PC-3 (cell line): ENCODE measurements at regions of chr5 and their contacts with region 1.

Region 1: DNA sequence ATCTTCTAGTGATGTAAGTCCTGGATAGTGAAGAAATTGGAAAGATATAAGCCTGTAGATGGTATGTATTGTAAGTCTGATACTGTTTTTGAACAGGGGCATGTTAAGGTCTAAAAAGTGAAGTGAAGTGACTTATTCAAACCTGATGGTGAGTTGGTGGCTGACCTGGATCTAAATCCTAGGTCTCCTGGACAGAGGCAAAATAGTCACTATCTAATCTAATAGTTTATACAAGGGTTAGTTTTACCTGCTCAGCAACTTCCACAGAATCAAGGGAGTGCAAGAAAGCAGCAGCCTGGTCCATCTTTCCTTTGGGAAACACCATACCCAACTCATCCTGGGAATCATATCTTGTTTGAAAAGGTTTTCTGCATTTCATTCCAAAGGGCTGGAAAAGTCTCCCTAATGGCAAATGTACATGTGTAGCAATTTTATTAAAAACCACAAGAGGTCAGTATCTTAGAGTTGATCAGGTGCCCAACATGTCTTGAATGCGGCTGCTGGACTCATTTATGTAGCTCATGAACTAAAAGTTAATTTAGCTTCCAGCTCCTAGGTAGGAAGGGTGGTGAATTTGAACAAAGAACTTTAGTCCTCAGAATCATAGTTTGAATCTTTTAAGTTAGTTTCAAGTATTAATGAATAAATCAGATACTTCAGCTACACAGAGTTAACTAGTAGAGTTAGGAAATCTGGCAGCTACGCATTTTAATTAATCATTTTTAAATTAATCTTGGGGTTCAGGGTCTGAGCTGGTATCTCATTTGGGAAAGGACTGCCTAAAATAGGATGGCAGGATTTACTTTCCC is 26.0 kb downstream of the SKP2 start:
- DNase-seq: peak; percentile 58
- ATAC-seq: peak; percentile 89
- H3K4me3 ChIP-seq: no peak overlapping the region
- H3K27ac ChIP-seq: no peak overlapping the region
- H3K4me1 ChIP-seq: no peaks in the 10 kb centered on the region
- H3K27me3 ChIP-seq: no peaks in the 10 kb centered on the region
- CTCF ChIP-seq: peak; percentile 80

Region 2: DNA sequence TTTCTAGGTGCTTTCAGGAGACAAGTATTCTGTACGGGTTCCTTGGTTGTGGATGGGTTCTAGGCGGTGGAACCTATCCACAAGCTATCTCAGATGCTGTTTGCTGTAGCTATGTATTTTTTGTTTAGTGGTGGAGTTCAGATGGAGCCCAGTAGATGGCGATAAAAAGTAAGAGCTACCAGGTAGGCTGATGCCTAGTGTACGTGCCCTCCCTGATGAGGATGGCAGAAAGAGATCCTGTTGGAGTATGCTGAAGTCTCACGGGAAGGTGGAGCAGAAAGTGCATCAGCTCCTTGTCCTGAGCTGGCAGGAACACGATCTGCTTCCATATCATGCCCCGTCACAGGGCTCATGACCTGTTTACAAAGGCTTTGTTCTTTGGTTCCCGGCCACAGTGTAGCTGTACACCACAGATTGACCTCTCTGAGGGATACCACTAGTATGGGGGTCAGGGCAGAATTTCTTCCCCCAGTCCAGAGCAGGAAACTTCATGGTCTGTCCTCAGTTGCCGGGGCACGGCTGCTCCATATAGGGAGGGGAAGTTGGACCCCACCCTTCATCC is 98.6 kb before region 1 on chr5:
- CTCF ChIA-PET with region 1: interaction called, 12 read pairs
- POLR2A ChIA-PET with region 1: no interaction called
- intact Hi-C with region 1: loop called (anchors 1 kb)
- DNase-seq: peak; percentile 82
- ATAC-seq: peak; percentile 99
- H3K4me3 ChIP-seq: peak overlapping the region; percentile 9; the same call in 1 of the 2 replicates
- H3K27ac ChIP-seq: no peak overlapping the region
- H3K4me1 ChIP-seq: peaks cover 5% of the 10 kb centered on the region; the same call in 1 of the 2 replicates
- H3K27me3 ChIP-seq: peaks cover 29% of the 10 kb centered on the region
- CTCF ChIP-seq: peak; percentile 83

Region 3: GRCh38 chr5:36111238-36111637 is 66.7 kb before region 1 on chr5:
- CTCF ChIA-PET with region 1: no interaction called
- POLR2A ChIA-PET with region 1: no interaction called
- intact Hi-C with region 1: no loop called
- DNase-seq: no peak
- ATAC-seq: no peak
- H3K4me3 ChIP-seq: no peak overlapping the region
- H3K27ac ChIP-seq: no peak overlapping the region
- H3K4me1 ChIP-seq: peaks cover 16% of the 10 kb centered on the region
- H3K27me3 ChIP-seq: no peaks in the 10 kb centered on the region
- CTCF ChIP-seq: no peak

Region 4: DNA sequence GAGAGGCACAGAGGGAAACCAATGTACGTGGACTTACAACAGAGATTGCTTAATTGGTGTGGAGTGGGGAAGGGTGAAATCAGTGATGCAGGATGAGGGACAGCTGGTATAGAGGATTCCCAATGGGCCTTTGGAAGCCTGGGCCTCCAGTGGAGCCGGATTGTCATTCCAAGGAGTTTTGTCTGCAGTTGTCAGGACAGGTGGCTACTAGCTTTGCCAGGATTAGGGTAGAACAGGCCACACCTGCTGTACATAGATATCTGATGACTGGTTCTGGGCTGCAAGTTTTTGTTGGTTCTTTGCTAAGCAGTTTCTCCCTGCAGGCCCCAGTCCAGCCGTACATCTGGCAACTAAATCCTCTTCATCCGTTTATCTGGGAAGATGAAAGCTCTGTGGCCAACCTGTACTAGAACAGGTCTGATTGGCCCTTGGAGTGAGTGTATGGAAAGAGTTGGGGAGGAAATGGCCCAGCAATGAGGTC is 21.8 kb before region 1 on chr5:
- CTCF ChIA-PET with region 1: no interaction called
- POLR2A ChIA-PET with region 1: no interaction called
- intact Hi-C with region 1: no loop called
- DNase-seq: no peak
- ATAC-seq: no peak
- H3K4me3 ChIP-seq: no peak overlapping the region
- H3K27ac ChIP-seq: no peak overlapping the region
- H3K4me1 ChIP-seq: peaks cover 7% of the 10 kb centered on the region
- H3K27me3 ChIP-seq: no peaks in the 10 kb centered on the region
- CTCF ChIP-seq: no peak

Region 5: GRCh38 chr5:36241631-36242533 is 64.0 kb after region 1 on chr5 and contains the start of gene NADK2:
- CTCF ChIA-PET with region 1: interaction called, 15 read pairs
- POLR2A ChIA-PET with region 1: no interaction called
- intact Hi-C with region 1: loop called (anchors 1 kb)
- DNase-seq: peak; percentile 97
- ATAC-seq: peak; percentile 75
- H3K4me3 ChIP-seq: peak within 1 kb of the TSS; percentile 75
- H3K27ac ChIP-seq: peak within 1 kb of the TSS; percentile 69
- H3K4me1 ChIP-seq: peaks cover 38% of the 10 kb centered on the region
- H3K27me3 ChIP-seq: no peaks in the 10 kb centered on the region
- CTCF ChIP-seq: peak; percentile 58
- total RNA-seq, gene NADK2: 17.7 and 22.9 TPM in 2 replicates

Region 6: DNA sequence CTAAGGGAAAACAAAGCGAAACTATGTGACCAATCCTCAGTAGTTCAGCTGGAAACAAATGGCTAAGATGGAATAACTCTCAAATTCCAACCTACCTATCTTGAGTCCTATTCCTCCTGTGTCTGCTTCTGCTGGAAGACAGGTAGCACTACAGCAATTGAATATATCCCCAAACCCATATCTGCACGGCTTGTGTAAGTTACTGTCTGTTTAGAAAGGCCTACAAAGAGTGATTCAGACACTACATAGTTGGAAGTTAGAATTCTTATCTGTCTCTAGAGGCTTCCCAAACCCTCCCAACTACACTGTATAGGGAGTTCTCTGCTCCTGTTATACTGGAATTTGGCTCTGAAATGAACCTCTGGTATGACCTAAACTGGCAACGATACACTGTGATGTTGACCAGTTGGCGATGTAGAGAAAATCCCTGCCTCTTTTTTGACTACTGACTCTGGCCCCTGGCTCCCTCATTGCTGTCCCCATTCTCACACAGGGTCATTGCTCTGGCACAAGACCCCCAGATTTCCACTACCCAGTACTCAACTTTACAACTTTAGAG is 86.4 kb after region 1 on chr5:
- CTCF ChIA-PET with region 1: interaction called, 10 read pairs
- POLR2A ChIA-PET with region 1: no interaction called
- intact Hi-C with region 1: no loop called
- DNase-seq: no peak
- ATAC-seq: no peak
- H3K4me3 ChIP-seq: no peak overlapping the region
- H3K27ac ChIP-seq: no peak overlapping the region
- H3K4me1 ChIP-seq: no peaks in the 10 kb centered on the region
- H3K27me3 ChIP-seq: no peaks in the 10 kb centered on the region
- CTCF ChIP-seq: no peak

Region 7: DNA sequence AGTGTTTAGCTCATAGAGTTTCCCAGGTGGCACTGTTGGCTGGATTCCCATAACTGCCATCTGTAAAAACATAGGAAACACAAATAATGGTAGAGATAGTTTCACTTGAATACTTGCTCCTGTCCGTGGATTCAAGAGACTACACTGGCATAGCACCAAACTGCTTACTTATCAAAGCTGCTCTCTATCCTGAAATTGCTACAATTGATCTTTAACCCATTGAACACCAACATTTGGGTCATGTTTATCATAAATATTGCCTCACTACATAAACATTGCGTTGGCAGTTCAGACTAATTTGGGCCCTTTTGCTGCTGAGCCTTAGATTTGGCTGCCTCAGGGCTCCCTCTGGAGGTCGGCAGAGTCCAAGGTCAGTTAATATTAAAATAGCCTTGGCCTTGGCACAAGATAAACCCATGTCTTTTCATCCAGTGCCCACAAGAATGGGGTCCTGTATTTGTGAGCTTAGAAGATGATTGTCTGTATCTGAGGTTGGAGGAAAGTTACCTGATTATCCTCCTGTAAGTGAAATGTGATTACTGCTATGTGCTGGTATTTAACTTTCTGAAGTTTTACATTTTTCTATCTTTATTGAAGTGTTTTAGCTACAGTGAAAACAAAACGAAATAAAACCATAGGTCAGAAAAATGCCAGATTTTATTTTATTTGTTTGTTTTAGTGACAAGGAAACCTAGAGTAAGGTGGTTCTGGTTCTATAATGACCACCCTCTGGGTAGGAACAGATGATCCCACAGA is 127.8 kb after region 1 on chr5:
- CTCF ChIA-PET with region 1: interaction called, 4 read pairs
- POLR2A ChIA-PET with region 1: no interaction called
- intact Hi-C with region 1: loop called (anchors 1 kb)
- DNase-seq: peak; percentile 63
- ATAC-seq: peak; percentile 65
- H3K4me3 ChIP-seq: no peak overlapping the region
- H3K27ac ChIP-seq: no peak overlapping the region
- H3K4me1 ChIP-seq: peaks cover 19% of the 10 kb centered on the region
- H3K27me3 ChIP-seq: peaks cover 21% of the 10 kb centered on the region
- CTCF ChIP-seq: peak; percentile 90

Region 8: DNA sequence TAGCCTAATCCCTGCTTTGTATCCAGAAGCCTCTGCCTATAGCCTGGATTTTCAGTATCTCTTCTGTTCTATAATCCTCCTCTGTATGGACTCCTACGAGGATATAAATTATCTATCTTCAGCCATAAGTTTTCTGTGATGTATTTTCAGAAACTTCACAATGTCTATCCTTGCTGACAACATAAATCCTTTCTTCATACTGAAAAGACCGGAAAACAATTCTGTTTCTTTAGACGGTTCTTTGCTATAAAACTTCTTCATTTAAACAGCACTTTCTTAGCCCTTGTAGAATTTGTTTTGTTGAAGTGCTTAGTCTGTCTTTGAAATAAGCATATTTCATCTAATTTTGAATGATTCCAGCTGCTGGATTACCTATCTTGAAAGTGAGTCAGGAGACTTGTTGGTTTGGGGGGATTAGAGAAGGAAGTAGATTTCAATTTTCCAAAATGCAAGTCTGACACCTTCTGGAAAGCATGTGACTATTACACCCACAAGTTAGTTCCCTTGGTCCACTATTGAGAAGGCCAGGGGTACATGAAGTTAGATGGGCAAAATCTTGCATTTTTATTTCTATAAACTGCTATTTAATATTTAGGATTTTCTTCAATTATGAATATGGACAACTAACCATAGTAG is 220.1 kb after region 1 on chr5:
- CTCF ChIA-PET with region 1: interaction called, 3 read pairs
- POLR2A ChIA-PET with region 1: no interaction called
- intact Hi-C with region 1: loop called (anchors 5 kb)
- DNase-seq: peak; percentile 49
- ATAC-seq: peak; percentile 24; the same call in 1 of the 2 replicates
- H3K4me3 ChIP-seq: no peak overlapping the region
- H3K27ac ChIP-seq: no peak overlapping the region
- H3K4me1 ChIP-seq: no peaks in the 10 kb centered on the region
- H3K27me3 ChIP-seq: no peaks in the 10 kb centered on the region
- CTCF ChIP-seq: peak; percentile 67

Region 9: GRCh38 chr5:36690041-36690961 is 512.4 kb after region 1 on chr5:
- CTCF ChIA-PET with region 1: no interaction called
- POLR2A ChIA-PET with region 1: no interaction called
- intact Hi-C with region 1: loop called (anchors 10 kb)
- DNase-seq: peak; percentile 92
- ATAC-seq: peak; percentile 93
- H3K4me3 ChIP-seq: peak overlapping the region; percentile 84
- H3K27ac ChIP-seq: peak overlapping the region; percentile 41
- H3K4me1 ChIP-seq: peaks cover 8% of the 10 kb centered on the region; the same call in 1 of the 2 replicates
- H3K27me3 ChIP-seq: no peaks in the 10 kb centered on the region
- CTCF ChIP-seq: peak; percentile 76